ENCODE measurements at regions of chr10 and their contacts with region 1.

Region 1: DNA sequence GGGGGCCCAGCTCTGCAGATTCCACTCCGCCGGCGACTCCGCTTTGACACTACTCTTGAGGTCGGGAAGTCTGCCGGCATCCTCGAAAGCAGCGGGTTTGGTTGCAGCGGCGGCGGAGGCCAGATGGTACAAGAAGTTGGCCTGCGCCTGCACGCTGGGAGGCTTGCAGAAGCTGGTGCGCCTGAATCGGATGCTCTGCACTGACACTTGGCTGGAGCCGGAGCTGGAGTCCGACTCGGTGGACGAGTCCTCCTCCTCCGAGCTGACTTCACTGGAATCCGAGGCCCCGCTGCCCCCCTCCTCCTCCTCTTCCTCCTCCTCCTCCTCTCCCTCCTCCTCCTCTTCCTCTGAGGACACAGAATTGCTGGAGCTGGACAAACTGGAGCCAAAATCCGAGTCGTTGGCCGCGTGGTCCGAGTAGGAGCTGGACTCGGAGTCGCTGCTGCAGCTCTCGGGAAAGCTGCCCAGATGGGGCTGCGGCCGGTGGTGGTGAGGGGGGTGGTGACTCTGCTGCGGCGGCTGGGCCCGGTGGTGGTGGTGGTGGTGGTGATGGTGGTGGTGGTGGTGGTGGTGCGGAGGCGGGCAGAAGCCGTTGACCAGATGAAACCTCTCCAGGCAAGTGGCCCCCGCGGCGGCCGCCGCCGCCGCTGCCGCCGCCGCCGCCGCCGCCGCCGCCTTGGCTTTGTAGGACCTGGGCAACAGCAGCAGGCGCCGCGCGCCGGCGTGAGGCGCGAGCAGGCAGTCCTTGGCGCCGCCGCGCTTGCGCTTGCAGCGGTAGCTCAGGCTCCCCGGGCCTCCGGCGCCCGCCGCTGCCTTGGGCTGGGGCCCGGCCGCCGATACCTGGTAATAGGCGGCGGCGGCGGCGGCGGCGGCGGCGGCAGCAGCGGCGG is 9.0 kb downstream of the SKIDA1 start:
- DNase-seq: peak; percentile 73 to 91
- ATAC-seq: peak; percentile 55 to 88 (median 80)
- H3K4me3 ChIP-seq: peak overlapping the region; percentile 77
- H3K27ac ChIP-seq: peak overlapping the region; percentile 74
- H3K4me1 ChIP-seq: peaks cover 23% of the 10 kb centered on the region
- H3K27me3 ChIP-seq: peaks cover 0 to 8% (median 0%) of the 10 kb centered on the region in 3 donors
- CTCF ChIP-seq: no peak

Region 2: DNA sequence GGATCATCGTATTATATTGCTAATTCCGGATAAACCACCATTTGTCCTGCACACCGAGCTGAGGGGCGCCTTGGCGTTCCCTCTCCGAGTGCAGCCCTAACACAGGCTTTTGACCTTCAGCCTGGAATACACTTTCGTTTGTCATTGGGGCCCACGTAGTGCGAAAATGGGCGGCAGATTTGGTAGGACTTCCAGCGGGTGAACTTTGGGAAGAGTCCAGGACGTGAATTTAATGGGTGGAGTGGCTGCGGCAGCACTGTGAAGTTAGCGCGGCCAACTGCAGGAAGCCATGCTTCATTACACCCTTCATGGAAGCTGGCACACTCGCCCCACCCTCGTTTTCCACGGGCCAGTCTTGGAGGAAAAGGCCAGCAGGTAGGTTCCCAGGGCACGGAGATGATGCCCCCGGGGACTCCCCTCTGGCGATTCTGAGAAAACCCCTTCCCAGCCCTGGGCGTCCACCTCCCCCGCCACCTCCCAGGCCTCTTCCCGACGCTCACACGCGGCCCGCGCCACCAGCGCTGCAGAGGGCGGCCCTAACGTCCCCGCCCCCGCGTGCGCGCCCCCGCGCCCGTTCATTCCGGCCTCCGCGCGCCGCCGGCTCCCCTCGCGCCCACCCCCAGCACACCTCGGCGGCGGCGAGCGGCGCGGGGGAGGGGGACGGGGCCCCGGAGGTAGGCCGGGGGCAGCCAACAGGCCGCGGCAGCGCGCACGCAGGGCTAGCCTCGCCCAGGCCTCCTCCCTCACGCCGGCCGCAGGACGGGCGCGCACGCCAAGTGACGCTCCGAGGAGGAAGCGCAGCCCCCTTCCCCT is 17.2 kb after region 1 on chr10 and contains the start of gene MLLT10:
- intact Hi-C with region 1: loop called in 1 of 2 experiments (anchors 1 kb)
- DNase-seq: peak; percentile 97 to 98
- ATAC-seq: peak; percentile 86 to 98 (median 94)
- H3K4me3 ChIP-seq: peak within 1 kb of the TSS; percentile 84
- H3K27ac ChIP-seq: peak within 1 kb of the TSS; percentile 99
- H3K4me1 ChIP-seq: peaks cover 32% of the 10 kb centered on the region
- H3K27me3 ChIP-seq: no peaks in the 10 kb centered on the region
- CTCF ChIP-seq: peak; percentile 35
- total RNA-seq, gene MLLT10: 11.8 to 21.1 (median 16.9) TPM

Measured in psoas muscle (tissue), 8 donors.